BJ (cell line): ENCODE measurements at regions of chr6 and their contacts with region 1.

Region 1: GRCh38 chr6:47787620-47788497 is 6.0 kb downstream of the OPN5 start:
- DNase-seq: no peak
- H3K4me3 ChIP-seq: no peak overlapping the region
- H3K27me3 ChIP-seq: peaks cover 8% of the 10 kb centered on the region
- CTCF ChIP-seq: peak; percentile 86

Region 2: GRCh38 chr6:47801984-47802383 is 14.1 kb after region 1 on chr6:
- CTCF ChIA-PET with region 1: interaction called, 33 read pairs
- POLR2A ChIA-PET with region 1: no interaction called
- DNase-seq: no peak
- H3K4me3 ChIP-seq: no peak overlapping the region
- H3K27me3 ChIP-seq: no peaks in the 10 kb centered on the region
- CTCF ChIP-seq: no peak

Region 3: DNA sequence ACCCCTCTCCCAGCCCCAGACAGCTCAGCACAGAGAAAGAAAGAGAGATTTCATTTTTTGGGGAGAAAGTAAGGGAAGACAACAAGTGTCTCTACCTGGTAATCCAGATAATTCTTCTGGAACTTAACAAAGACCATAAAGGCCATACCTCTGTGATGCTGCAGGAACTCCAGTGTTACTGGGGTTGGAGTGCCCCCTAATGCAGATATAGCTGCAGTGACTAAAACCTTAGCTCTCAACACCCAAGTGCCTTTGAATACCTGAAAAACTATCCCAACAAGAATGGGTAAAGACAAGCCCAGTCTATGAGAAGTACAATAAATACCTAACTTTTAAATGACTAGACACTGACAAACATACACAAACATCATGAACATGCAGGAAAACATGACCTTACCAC is 688.4 kb after region 1 on chr6:
- CTCF ChIA-PET with region 1: interaction called, 12 read pairs
- POLR2A ChIA-PET with region 1: no interaction called
- DNase-seq: no peak
- H3K4me3 ChIP-seq: no peak overlapping the region
- H3K27me3 ChIP-seq: no peaks in the 10 kb centered on the region
- CTCF ChIP-seq: 0 out of 2 replicates have a peak, but pooled peaks have one; percentile 31

Region 4: GRCh38 chr6:49409951-49410542 is 1622.2 kb after region 1 on chr6:
- CTCF ChIA-PET with region 1: interaction called, 36 read pairs
- POLR2A ChIA-PET with region 1: no interaction called
- DNase-seq: no peak
- H3K4me3 ChIP-seq: no peak overlapping the region
- H3K27me3 ChIP-seq: no peaks in the 10 kb centered on the region
- CTCF ChIP-seq: peak; percentile 86